Posterior vena cava (tissue), 2 donors: ENCODE measurements at regions of chr13 and their contacts with region 1.

Region 1: DNA sequence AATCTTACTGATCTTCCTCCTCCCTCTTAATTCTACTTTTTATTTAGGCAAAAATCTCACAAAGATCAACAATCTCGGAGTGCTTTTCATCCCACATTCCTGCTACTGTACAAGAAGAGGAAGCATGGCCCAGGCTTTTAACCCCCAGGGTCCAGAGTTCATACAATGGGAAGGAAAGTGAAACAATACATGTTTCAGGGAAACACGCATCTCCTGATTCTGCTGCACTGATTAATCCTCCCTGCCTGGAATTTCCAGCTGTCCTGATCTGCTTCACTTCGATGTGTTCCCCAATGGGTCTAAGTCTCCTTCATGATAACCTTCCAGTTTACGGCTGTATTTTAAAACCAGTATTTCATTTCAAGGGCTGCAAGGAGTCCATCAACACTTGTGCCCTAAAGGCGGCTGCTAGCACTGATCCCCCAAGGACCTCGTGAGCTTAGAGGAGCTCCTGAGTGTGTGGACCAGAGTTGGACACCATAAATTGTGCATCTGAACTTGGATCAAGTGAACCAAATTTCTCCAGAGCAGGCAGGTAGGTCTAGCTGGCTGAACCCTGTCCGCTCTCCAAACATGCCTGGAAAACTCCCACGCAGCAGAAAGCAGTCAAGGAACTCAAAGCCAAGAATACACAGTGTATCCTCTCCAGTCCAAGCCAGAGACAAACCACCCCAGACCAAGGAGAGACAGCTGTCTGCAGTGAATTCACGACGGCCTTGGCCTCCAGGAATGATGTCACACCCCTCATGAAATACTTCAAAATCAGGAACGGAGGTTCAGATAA is 44.3 kb downstream of the COL4A1 start:
- DNase-seq: no peak

Region 2: GRCh38 chr13:110301606-110302553 is 39.2 kb after region 1 on chr13:
- intact Hi-C with region 1: loop called in 1 of 2 experiments (anchors 2 kb)
- DNase-seq: no peak